ENCODE measurements at regions of chr2 and their contacts with region 1.

Region 1: DNA sequence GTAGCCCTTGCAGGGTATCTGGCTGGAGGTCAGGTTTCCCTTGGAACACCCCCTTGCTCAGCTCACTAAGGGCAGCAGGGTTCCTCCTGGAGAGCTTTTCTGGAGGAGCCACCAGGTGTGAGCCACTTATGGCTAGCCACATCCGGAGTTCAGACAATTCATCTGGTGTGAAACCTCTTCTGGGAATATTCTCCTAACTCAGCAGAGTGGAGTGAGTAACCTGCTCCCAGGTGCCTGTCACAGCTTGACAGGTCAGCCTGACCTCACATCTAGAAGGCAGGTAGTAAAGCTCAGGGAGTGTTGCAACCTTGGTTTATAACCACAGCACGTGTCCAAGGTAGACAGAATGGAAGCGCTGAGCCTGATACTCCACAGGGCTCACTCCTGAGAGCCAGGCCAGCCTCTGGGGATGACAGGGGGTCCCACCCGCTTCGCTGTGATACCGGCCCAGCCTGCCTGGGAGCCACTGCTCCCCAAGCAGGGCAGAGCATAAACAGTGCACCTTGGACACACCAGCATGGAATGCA is 62.6 kb upstream of the TGFA start:
- DNase-seq: no peak
- ATAC-seq: no peak
- H3K4me3 Mint-ChIP-seq: no peak overlapping the region
- H3K27ac Mint-ChIP-seq: no peak overlapping the region
- H3K4me1 Mint-ChIP-seq: peaks cover 6% of the 10 kb centered on the region
- H3K27me3 Mint-ChIP-seq: peaks cover 14% of the 10 kb centered on the region

Region 2: GRCh38 chr2:70647873-70648481 is 31.7 kb after region 1 on chr2:
- CTCF ChIA-PET with region 1: interaction called, 15 read pairs
- DNase-seq: peak; percentile 79
- ATAC-seq: peak; percentile 86
- H3K4me3 Mint-ChIP-seq: no peak overlapping the region
- H3K27ac Mint-ChIP-seq: no peak overlapping the region
- H3K4me1 Mint-ChIP-seq: peaks cover 2% of the 10 kb centered on the region
- H3K27me3 Mint-ChIP-seq: peaks cover 29% of the 10 kb centered on the region

Region 3: GRCh38 chr2:70733646-70734180 is 117.5 kb after region 1 on chr2:
- CTCF ChIA-PET with region 1: no interaction called
- DNase-seq: no peak
- ATAC-seq: no peak
- H3K4me3 Mint-ChIP-seq: no peak overlapping the region
- H3K27ac Mint-ChIP-seq: no peak overlapping the region
- H3K4me1 Mint-ChIP-seq: no peaks in the 10 kb centered on the region
- H3K27me3 Mint-ChIP-seq: peaks cover 20% of the 10 kb centered on the region